Activated CD8-positive, alpha-beta memory T cell treated with anti-CD3 and anti-CD28 coated beads, Interleukin-2, amount 10 ng/mL, durations not matched to agents 7 days and 5 days (primary cell): ENCODE measurements at regions of chr11 and their contacts with region 1.

Region 1: DNA sequence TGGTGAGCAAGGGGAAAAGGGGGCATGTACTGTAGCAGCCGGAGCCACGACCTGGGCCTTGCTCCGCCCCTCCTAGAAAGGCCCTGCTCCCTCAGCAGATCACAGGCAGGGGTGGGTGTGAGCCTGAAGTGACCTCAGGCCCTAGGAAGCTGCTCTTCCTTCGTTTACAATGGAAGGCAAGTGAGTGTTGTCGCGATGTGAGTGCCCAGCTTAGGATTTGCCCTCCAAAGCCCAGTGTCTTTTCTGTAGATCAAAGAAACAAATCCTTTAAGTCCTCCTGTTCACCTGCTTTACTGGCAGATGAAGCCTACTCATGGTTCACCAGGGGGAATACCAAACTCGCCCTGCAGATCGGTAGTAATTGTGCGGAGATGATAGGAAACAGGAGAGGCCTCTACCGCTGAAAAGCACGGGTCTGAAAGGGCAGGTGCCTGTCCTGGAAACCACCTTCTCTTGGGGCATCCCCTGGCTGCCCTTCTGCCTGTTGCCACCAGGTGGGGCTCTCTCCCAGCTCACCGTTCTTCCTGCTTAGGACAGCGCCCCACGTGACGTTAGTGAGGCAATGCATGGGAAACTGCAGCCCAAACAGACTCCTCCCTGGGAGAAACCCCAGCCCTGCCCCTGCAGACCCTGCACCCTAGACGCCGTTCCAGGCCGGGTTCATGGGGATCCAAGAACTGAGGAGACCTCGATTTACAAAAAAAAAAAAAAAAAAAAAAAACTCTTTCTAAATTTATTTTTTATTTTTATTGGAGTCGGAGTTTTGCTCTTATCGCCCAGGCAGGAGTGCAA is 45.9 kb upstream of the RAB1B start:
- DNase-seq: peak; percentile 95
- ATAC-seq: peak; percentile 94
- H3K4me3 Mint-ChIP-seq: no peak overlapping the region
- H3K27ac Mint-ChIP-seq: peak overlapping the region; percentile 78
- H3K4me1 Mint-ChIP-seq: peaks cover 28% of the 10 kb centered on the region
- H3K27me3 Mint-ChIP-seq: no peaks in the 10 kb centered on the region

Region 2: DNA sequence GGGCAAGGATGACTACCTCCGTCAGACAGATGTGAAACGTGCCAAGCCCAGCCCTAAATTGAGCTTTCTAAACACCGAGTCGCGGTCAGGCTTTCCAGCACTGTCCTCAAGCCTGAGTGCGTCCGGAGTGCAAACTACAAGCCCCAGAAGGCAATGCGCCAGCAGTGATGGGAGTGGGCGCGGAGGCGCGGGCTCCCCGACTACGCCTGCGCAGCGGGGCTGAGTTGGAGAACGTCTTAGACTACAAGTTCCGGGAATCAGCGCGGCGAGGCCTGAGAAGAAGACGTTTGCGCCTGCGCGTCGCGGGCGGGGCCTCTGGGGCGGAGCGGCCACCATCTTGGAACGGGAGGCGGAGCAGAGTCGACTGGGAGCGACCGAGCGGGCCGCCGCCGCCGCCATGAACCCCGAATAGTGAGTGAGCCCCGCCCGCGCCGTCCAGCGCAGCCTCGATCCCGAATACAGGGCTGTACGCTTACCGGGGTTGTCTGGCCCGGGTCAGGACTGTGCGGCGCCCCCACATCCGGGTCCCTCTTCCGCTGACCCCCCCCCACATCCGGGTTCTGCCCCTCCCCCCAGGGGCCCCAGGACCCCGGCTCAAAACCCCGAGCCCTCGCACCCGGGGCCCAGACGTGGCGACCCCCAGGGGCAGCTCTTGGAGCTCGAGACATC is 45.9 kb after region 1 on chr11 and contains the start of gene RAB1B:
- CTCF ChIA-PET with region 1: interaction called, 13 read pairs
- DNase-seq: peak; percentile 100
- ATAC-seq: peak; percentile 88
- H3K4me3 Mint-ChIP-seq: peak within 1 kb of the TSS; percentile 91
- H3K27ac Mint-ChIP-seq: peak within 1 kb of the TSS; percentile 91
- H3K4me1 Mint-ChIP-seq: peaks cover 49% of the 10 kb centered on the region
- H3K27me3 Mint-ChIP-seq: no peaks in the 10 kb centered on the region
- total RNA-seq, gene RAB1B: 146 to 155 TPM

Region 3: GRCh38 chr11:66282468-66283386 is 60.2 kb after region 1 on chr11:
- CTCF ChIA-PET with region 1: interaction called, 75 read pairs
- DNase-seq: peak; percentile 99
- ATAC-seq: peak; percentile 88
- H3K4me3 Mint-ChIP-seq: no peak overlapping the region
- H3K27ac Mint-ChIP-seq: peak overlapping the region; percentile 36
- H3K4me1 Mint-ChIP-seq: peaks cover 26% of the 10 kb centered on the region
- H3K27me3 Mint-ChIP-seq: peaks cover 3% of the 10 kb centered on the region